ENCODE measurements at regions of chr2 and their contacts with region 1.

Region 1: GRCh38 chr2:169141713-169142352 is 72.5 kb downstream of the DHRS9 start:
- DNase-seq: peak; percentile 61
- H3K4me3 Mint-ChIP-seq: no peak overlapping the region
- H3K27ac Mint-ChIP-seq: no peak overlapping the region
- H3K4me1 Mint-ChIP-seq: no peaks in the 10 kb centered on the region
- H3K27me3 Mint-ChIP-seq: no peaks in the 10 kb centered on the region

Region 2: GRCh38 chr2:168961450-168962229 is 180.2 kb before region 1 on chr2:
- CTCF ChIA-PET with region 1: interaction called, 65 read pairs
- POLR2A ChIA-PET with region 1: no interaction called
- DNase-seq: no peak
- H3K4me3 Mint-ChIP-seq: no peak overlapping the region
- H3K27ac Mint-ChIP-seq: no peak overlapping the region
- H3K4me1 Mint-ChIP-seq: peaks cover 18% of the 10 kb centered on the region
- H3K27me3 Mint-ChIP-seq: peaks cover 5% of the 10 kb centered on the region

Region 3: DNA sequence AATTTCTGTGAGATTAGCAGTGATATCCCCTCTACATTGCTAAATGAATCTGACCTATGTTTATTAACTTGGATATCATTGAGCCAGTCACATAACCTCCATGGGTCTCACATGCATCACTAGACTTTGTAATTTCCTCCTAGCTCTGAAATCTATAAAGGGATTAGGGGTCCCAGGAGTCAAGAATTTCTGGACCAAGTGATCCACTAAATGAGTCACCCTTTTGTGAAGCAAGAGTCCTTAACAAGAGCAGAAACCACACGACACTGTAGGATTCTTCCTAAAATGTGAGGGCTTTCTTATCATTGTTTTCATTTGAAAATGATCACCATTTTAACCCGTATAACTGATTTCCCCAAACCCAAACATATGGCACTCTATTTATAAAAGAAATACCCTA is 17.9 kb after region 1 on chr2:
- CTCF ChIA-PET with region 1: interaction called, 12 read pairs
- POLR2A ChIA-PET with region 1: no interaction called
- DNase-seq: no peak
- H3K4me3 Mint-ChIP-seq: no peak overlapping the region
- H3K27ac Mint-ChIP-seq: no peak overlapping the region
- H3K4me1 Mint-ChIP-seq: no peaks in the 10 kb centered on the region
- H3K27me3 Mint-ChIP-seq: peaks cover 7% of the 10 kb centered on the region

Measured in activated CD4-positive, alpha-beta memory T cell treated with anti-CD3 and anti-CD28 coated beads, Interleukin-2, amount 10 ng/mL, durations not matched to agents 7 days and 5 days (primary cell).